Heart right ventricle (tissue), 16 donors: ENCODE measurements at regions of chr7 and their contacts with region 1.

Region 1: GRCh38 chr7:149195180-149196150 is at the start of gene ZNF282:
- DNase-seq: peak; percentile 89 to 90
- ATAC-seq: peak; percentile 96 to 99 (median 98)
- H3K4me3 ChIP-seq: peak within 1 kb of the TSS; percentile 62 to 97 (median 85)
- H3K27ac ChIP-seq: peak within 1 kb of the TSS; percentile 68 to 96 (median 91)
- H3K4me1 ChIP-seq: peaks cover 0 to 26% (median 24%) of the 10 kb centered on the region in 9 donors
- H3K27me3 ChIP-seq: peaks cover 0 to 3% (median 0%) of the 10 kb centered on the region in 7 donors
- CTCF ChIP-seq: peak; percentile 30 to 89 (median 67)
- total RNA-seq, gene ZNF282: 10.4 to 19.9 (median 12.9) TPM

Region 2: GRCh38 chr7:148856891-148857290 is 338.6 kb before region 1 on chr7:
- intact Hi-C with region 1: no loop called
- DNase-seq: no peak
- ATAC-seq: no peak
- H3K4me3 ChIP-seq: no peak overlapping the region
- H3K27ac ChIP-seq: no peak overlapping the region
- H3K4me1 ChIP-seq: peaks cover 0 to 9% (median 0%) of the 10 kb centered on the region in 9 donors
- H3K27me3 ChIP-seq: no peaks in the 10 kb centered on the region
- CTCF ChIP-seq: no peak

Region 3: DNA sequence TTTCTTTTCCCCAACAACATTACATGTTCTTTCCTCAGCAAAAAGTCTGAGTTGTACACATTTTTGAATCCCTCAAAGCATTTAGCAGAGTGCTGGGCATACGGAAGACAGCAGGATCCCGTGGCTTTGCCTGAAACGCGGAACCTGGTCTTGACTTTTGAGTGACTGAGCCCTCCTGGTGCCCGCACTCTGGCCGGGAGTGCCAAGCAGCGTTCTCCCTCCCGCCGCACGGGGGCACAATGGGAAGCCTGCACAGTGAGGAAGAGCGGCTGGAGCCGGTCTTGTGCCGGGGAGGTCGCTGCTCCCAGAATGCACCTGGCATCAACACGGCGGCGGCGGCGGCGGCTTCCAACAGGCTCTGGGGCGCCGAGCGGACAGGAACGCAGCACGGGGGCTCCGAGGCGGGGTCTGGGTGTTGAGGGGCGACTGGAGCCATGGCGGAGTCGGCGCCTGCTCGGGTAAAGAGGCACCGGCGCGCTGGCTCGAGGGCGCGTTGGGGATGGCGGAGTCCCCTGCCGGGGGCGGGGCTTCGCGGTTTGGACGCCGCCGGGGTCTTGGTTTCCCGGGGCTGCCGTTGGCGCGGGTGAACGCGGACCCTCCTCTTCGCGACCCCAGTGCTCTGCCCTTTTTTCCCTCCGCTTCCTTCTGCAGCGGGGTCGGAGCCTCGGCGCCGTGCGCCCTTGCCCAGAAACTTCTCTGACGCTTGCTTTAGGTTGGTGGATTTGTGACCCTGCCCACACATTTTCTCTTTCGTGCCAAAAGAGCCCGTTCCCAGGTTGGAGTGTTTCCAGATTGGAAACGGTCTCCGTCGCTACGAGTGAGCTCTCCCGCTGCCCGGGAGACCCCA is 44.1 kb after region 1 on chr7 and contains the start of gene ZNF212:
- intact Hi-C with region 1: loop called in 3 of 10 experiments (anchors 1 to 5 kb)
- DNase-seq: peak; percentile 89 to 90
- ATAC-seq: peak; percentile 99 to 100 (median 100)
- H3K4me3 ChIP-seq: peak within 1 kb of the TSS; percentile 63 to 100 (median 94)
- H3K27ac ChIP-seq: peak within 1 kb of the TSS in 9 of 10 donors; percentile 47 to 81 (median 76)
- H3K4me1 ChIP-seq: peaks cover 7 to 26% (median 19%) of the 10 kb centered on the region in 9 donors
- H3K27me3 ChIP-seq: peaks cover 0 to 4% (median 0%) of the 10 kb centered on the region in 7 donors
- CTCF ChIP-seq: peak; percentile 75 to 93 (median 87)
- total RNA-seq, gene ZNF212: 3.7 to 5.9 (median 4.8) TPM